MCF 10A (cell line): ENCODE measurements at regions of chr1 and their contacts with region 1.

Region 1: DNA sequence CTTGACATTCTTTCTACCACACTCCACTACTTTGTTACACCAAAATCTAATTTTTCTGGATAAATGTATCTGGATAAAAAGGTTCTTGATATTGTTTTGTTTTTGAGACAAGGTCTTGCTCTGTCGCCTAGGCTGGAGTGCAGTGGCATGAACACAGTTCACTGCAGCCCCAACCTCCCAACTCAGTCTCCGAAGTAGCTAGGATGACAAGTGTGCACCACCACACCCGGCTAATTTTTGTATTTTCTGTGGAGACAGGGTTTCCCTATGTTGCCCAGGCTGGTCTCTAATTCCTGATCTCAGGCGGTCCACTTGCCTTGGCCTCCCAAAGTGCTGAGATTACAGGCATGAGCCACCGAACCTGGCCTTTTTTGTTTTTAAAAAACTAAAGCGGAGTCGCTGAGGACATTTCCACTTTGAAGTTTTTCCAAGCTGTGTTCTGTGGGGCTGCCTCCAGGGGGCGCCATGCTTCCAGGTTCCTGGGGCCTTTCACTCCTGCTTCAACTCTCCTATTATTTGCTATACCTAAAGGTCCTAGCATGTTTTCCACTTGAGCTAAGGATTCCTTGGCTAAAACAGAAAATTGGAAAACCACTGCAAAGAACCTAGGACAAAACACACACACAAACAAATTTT is 14.1 kb upstream of the NCMAP start:
- DNase-seq: peak; percentile 24
- H3K4me3 Mint-ChIP-seq: no peak overlapping the region
- H3K27ac Mint-ChIP-seq: peak overlapping the region; percentile 39
- H3K4me1 Mint-ChIP-seq: peaks cover 8% of the 10 kb centered on the region
- H3K27me3 Mint-ChIP-seq: no peaks in the 10 kb centered on the region
- CTCF ChIP-seq: peak; percentile 44

Region 2: GRCh38 chr1:24567792-24568388 is 26.1 kb after region 1 on chr1:
- CTCF ChIA-PET with region 1: no interaction called
- POLR2A ChIA-PET with region 1: no interaction called
- intact Hi-C with region 1: no loop called
- DNase-seq: peak; percentile 19
- H3K4me3 Mint-ChIP-seq: no peak overlapping the region
- H3K27ac Mint-ChIP-seq: peak overlapping the region; percentile 28
- H3K4me1 Mint-ChIP-seq: peaks cover 2% of the 10 kb centered on the region
- H3K27me3 Mint-ChIP-seq: no peaks in the 10 kb centered on the region
- CTCF ChIP-seq: no peak

Region 3: DNA sequence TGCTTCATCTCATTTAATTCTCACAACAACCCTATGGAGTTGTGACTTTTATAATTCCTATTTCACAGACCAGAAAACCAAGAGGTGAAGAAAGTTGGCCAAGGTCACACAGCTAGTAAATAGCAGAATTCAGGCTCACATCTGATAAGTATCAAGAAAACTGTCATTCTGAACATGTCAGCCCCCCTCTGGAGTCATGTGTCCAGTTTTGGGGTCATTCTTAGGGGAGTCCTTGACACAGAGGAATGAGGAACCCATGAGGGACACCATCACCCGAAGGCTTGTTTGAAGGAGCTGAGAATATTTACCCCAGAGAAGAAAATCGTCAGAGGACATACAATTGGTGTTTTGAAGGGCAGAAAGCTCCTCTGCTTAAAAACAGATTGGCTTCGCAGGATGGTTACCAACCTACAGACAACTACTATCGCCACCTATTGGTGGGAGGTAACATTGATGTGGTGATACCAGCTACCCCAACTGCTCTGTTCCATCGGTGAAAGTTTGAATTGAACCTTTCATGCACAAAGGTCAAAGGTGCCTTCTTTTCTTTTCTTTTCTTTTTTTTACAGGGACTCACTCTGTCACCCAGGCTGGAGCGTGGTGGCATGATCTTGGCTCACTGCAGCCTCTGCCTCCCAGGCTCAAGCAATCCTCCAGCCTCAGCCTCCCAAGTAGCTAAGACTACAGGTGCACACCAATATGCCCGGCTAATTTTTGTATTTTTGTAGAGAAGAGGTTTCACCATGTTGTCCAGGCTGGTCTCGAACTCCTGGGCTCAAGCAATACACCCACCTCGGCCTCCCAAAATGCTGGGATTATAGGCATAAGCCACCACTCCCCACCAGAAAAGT is 45.4 kb after region 1 on chr1:
- CTCF ChIA-PET with region 1: interaction called, 10 read pairs
- POLR2A ChIA-PET with region 1: no interaction called
- intact Hi-C with region 1: no loop called
- DNase-seq: peak; percentile 72
- H3K4me3 Mint-ChIP-seq: no peak overlapping the region
- H3K27ac Mint-ChIP-seq: no peak overlapping the region
- H3K4me1 Mint-ChIP-seq: peaks cover 9% of the 10 kb centered on the region
- H3K27me3 Mint-ChIP-seq: no peaks in the 10 kb centered on the region
- CTCF ChIP-seq: peak; percentile 70

Region 4: DNA sequence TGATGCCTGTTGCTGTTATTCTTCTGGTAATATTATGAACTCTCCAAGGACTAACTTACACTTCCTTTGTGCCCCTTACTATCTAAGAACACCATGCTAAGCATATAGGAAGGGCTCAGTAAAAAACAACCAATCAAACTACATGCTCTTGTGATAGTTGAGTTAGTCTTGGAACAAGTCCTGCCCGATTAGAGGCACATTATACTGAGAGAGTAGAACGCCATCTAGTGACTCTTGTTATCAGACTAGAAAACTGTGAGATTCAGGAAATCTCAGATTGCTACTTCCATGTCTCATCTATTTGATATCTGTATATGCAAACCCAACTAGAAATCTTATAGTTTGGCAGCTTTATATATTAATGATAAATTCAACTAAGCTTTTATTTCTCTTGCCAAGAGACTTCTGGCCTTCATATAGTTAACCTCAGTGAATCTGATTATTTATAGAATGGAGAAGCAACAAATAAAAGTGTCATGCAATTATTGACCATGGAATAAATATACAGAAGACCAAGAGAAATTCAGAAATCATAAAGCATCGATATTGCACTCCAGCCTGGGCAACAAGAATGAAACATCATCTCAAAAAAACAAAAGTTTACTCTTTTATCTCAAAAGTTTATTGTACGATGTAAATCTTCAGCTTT is 93.5 kb after region 1 on chr1:
- CTCF ChIA-PET with region 1: interaction called, 9 read pairs
- POLR2A ChIA-PET with region 1: no interaction called
- intact Hi-C with region 1: loop called (anchors 5 kb)
- DNase-seq: peak; percentile 72
- H3K4me3 Mint-ChIP-seq: no peak overlapping the region
- H3K27ac Mint-ChIP-seq: no peak overlapping the region
- H3K4me1 Mint-ChIP-seq: peaks cover 12% of the 10 kb centered on the region
- H3K27me3 Mint-ChIP-seq: peaks cover 22% of the 10 kb centered on the region
- CTCF ChIP-seq: peak; percentile 44

Region 5: DNA sequence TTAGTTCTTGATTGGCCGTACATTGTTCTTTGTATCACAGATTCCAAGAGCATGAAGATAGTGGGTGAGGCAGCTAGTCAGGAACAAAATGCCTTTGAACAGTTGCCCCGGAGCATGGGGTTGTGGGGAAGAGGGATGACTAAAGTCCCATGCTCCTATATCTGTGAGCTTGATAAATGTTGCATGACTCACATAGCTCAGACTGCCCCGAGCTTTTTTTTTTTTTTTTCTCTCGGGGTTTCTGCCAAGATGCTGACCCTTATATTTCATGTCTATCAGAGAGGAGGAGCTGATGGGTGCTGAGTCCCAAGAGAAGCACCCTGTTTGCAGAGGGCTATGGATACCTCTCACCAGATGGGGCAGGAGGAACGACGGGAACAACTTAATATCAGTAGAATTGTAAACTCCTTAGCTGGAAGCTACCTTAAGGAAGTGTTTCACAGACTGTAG is 141.9 kb after region 1 on chr1:
- CTCF ChIA-PET with region 1: no interaction called
- POLR2A ChIA-PET with region 1: no interaction called
- intact Hi-C with region 1: no loop called
- DNase-seq: peak; percentile 95
- H3K4me3 Mint-ChIP-seq: peak overlapping the region; percentile 60
- H3K27ac Mint-ChIP-seq: peak overlapping the region; percentile 96
- H3K4me1 Mint-ChIP-seq: peaks cover 19% of the 10 kb centered on the region
- H3K27me3 Mint-ChIP-seq: no peaks in the 10 kb centered on the region
- CTCF ChIP-seq: no peak